Breast epithelium (tissue), 4 donors: ENCODE measurements at regions of chr14 and their contacts with region 1.

Region 1: DNA sequence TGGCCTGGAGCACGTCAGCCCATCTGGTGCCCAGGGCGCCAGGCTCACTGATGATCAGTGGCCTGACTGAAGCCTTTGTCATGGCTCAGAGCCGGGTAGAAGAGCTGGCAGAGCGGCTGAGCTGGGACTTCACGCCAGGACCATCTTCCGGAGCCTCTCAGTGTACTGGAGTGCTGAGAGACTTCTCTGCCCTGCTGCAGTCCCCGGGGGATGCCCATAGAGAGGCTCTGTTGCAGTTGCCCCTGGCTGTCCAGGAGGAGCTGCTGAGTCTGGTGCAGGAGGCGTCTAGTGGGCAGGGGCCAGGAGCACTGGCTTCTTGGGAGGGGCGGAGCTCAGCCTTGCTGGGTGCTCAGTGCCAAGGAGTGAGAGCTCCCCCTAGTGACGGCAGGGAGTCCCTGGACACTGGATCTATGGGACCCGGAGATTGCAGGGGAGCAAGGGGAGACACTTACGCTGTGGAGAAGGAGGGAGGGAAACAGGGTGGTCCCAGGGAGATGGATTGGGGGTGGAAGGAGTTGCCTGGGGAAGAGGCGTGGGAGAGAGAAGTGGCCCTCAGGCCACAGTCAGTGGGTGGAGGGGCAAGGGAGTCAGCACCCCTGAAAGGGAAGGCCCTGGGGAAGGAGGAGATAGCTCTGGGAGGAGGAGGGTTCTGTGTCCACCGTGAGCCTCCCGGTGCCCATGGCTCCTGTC is 2.0 kb downstream of the KHNYN start:
- DNase-seq: peak; percentile 78 to 86
- H3K4me3 ChIP-seq: peak overlapping the region; percentile 65 to 94 (median 91)
- H3K27ac ChIP-seq: peak overlapping the region; percentile 96 to 100
- H3K4me1 ChIP-seq: peaks cover 6 to 14% of the 10 kb centered on the region in 2 donors
- H3K27me3 ChIP-seq: no peaks in the 10 kb centered on the region
- CTCF ChIP-seq: peak; percentile 88 to 97 (median 92)
- POLR2A ChIP-seq: no peak

Region 2: GRCh38 chr14:24332268-24332993 is 99.3 kb before region 1 on chr14:
- intact Hi-C with region 1: loop called (anchors 2 kb)
- DNase-seq: peak; percentile 72 to 77
- H3K4me3 ChIP-seq: peak overlapping the region; percentile 10 to 64 (median 47)
- H3K27ac ChIP-seq: peak overlapping the region in 1 of 2 donors; percentile 12
- H3K4me1 ChIP-seq: peaks cover 5 to 6% of the 10 kb centered on the region in 2 donors
- H3K27me3 ChIP-seq: peaks cover 0 to 11% of the 10 kb centered on the region in 2 donors
- CTCF ChIP-seq: peak; percentile 57 to 89 (median 81)
- POLR2A ChIP-seq: no peak

Region 3: DNA sequence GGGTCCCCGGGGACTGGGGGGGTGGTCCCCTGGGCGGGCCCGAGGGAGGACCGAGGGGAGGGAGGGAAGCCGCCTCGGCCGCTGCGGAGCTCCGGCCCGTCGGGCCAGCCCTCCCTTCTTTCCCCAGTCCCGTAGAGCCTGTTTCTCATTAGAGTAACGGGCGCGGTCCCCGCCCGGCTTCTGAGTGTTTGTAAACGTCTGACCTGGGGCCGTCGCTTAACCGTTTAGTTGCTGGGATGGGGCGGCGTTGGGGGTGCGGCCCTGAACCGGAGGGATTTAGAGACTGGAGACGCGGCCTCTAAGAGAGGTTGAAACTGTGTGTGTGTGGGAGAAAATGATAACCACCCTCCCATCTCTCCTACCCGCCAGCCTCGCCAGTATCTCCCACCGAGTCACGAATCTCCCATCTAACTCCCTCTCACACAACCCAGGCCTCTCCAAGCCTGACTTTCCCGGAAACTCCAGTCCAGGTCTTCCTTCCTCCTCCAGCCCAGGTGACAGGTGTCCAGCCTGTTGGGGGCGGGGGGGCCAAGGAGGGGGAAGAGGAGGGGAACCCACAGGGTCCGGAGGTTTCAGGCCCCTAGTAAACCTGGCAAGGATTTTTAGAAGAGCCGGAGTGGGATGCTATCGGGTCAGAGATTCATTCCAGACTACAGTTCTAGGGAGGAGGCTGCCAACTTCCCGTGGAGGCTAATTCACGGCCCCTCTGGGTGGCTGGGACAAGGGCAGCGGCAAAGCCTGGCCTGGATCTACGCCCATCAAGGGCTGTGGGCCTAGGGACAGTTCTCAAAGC is 64.8 kb before region 1 on chr14:
- intact Hi-C with region 1: loop called (anchors 2 kb)
- DNase-seq: peak; percentile 90 to 92
- H3K4me3 ChIP-seq: peak overlapping the region; percentile 65 to 84 (median 67)
- H3K27ac ChIP-seq: peak overlapping the region; percentile 93
- H3K4me1 ChIP-seq: peaks cover 4 to 5% of the 10 kb centered on the region in 2 donors
- H3K27me3 ChIP-seq: no peaks in the 10 kb centered on the region
- CTCF ChIP-seq: no peak
- POLR2A ChIP-seq: peak; percentile 51

Region 4: GRCh38 chr14:24442273-24443052 is 10.7 kb after region 1 on chr14 and contains the start of gene SDR39U1:
- intact Hi-C with region 1: loop called (anchors 1 kb)
- DNase-seq: peak; percentile 96 to 98
- H3K4me3 ChIP-seq: peak within 1 kb of the TSS; percentile 59 to 82 (median 75)
- H3K27ac ChIP-seq: peak within 1 kb of the TSS; percentile 99 to 100
- H3K4me1 ChIP-seq: peaks cover 0 to 17% of the 10 kb centered on the region in 2 donors
- H3K27me3 ChIP-seq: no peaks in the 10 kb centered on the region
- CTCF ChIP-seq: peak; percentile 14 to 21 (median 16)
- POLR2A ChIP-seq: peak; percentile 88
- total RNA-seq, gene SDR39U1: 42.1 to 63.4 (median 53.4) TPM

Region 5: GRCh38 chr14:24508155-24508840 is 76.6 kb after region 1 on chr14 and contains the start of gene CMA1:
- intact Hi-C with region 1: no loop called
- DNase-seq: no peak
- H3K4me3 ChIP-seq: no peak within 1 kb of the TSS
- H3K27ac ChIP-seq: no peak within 1 kb of the TSS
- H3K4me1 ChIP-seq: no peaks in the 10 kb centered on the region
- H3K27me3 ChIP-seq: no peaks in the 10 kb centered on the region
- CTCF ChIP-seq: no peak
- POLR2A ChIP-seq: no peak
- total RNA-seq, gene CMA1: 0.66 to 7.2 TPM in 2 of 3 donors, not detected in the other